ENCODE measurements at regions of chr1 and their contacts with region 1.

Region 1: DNA sequence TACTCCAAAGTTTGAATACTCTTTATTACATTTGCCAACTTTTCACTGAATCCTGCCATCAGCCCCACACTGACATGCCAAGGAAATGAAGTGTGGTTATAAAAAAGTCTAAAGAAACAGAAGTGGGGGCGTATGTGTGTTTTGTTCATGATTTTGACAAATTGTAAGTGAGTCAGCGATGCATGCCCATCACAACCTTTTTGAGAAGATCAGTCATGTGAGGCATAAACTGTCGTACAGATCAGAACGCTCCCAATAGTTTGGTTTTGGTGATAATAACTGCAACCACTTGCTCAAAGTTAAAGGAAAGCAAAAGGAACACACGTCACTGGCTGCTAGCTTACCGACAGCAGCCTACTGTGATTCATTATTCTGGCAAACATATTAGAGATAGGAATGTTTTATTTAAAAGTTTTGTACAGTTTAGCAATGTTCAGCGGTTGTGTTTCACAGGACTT is 95.6 kb downstream of the RGS2 start:
- DNase-seq: peak; percentile 27
- ATAC-seq: peak; percentile 93
- H3K4me3 Mint-ChIP-seq: no peak overlapping the region
- H3K27ac Mint-ChIP-seq: no peak overlapping the region
- H3K4me1 Mint-ChIP-seq: peaks cover 6% of the 10 kb centered on the region
- H3K27me3 Mint-ChIP-seq: no peaks in the 10 kb centered on the region

Region 2: GRCh38 chr1:192343344-192343743 is 561.1 kb before region 1 on chr1:
- CTCF ChIA-PET with region 1: no interaction called
- POLR2A ChIA-PET with region 1: no interaction called
- intact Hi-C with region 1: no loop called
- DNase-seq: no peak
- ATAC-seq: no peak
- H3K4me3 Mint-ChIP-seq: no peak overlapping the region
- H3K27ac Mint-ChIP-seq: no peak overlapping the region
- H3K4me1 Mint-ChIP-seq: no peaks in the 10 kb centered on the region
- H3K27me3 Mint-ChIP-seq: no peaks in the 10 kb centered on the region

Region 3: DNA sequence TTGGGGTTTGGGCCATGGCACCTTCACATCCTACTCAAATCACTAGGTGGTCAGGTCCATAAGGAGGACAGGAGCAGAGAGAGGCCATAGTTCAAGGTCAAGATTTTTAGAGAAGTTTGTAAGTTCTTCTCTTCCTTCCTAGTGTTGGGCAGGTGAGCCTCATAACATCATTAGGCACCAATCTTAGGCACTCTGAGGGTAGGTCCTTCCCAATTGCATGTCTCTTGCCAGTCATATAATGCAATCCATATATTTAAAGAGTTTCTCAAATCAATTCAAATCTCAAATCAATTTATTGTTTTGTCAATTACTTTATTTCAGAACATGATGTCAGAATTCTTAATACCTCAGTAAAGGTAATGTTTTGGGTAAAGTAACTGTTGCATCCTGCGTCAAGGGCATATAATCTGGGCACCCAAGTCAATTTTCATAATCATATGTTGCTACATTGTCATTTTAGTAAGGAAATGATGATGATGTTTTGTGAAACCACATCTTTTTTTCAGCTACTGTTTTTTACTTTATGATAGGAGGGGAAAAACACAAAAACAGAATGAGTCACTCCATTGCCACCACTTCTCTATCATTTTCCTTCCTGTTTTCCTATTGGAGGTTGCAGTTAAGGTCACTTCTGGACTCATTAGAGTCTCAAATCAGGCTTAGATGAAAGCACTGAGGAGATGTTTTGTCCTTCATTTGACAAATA is 32.0 kb after region 1 on chr1:
- CTCF ChIA-PET with region 1: no interaction called
- POLR2A ChIA-PET with region 1: no interaction called
- intact Hi-C with region 1: loop called (anchors 1 to 2 kb)
- DNase-seq: no peak
- ATAC-seq: peak; percentile 85
- H3K4me3 Mint-ChIP-seq: no peak overlapping the region
- H3K27ac Mint-ChIP-seq: peak overlapping the region; percentile 12
- H3K4me1 Mint-ChIP-seq: peaks cover 18% of the 10 kb centered on the region
- H3K27me3 Mint-ChIP-seq: no peaks in the 10 kb centered on the region

Region 4: DNA sequence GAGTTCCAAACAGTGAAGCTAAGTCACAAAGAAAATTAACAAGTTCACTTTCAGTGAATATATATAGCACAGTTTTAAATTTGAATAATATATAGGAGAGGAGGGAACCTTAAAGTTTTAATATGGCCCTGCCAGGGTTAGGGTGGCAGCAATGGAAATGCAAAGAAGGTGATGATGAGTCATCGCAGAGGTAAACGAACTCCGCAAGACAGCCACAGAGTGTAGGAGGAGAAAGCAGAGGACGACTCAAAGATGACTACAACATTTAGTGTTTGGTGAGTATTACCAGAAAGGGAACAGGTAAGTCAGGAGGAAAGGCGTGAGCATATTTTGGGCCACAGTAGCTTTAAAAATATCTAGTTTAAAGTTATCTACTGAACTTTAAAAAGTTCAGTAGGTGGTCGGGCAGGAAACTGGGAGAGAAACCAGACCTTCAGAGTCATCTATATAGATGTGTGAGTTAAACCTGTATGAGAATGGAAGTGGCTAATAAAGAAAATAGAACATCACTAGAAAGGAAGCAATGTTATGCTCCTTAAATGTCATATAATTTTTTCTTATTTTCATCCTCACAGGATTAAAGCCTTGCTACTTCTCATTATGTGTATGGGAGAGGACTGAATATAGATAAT is 79.0 kb after region 1 on chr1:
- CTCF ChIA-PET with region 1: no interaction called
- POLR2A ChIA-PET with region 1: no interaction called
- intact Hi-C with region 1: loop called in 1 of 2 experiments (anchors 1 kb)
- DNase-seq: peak; percentile 67
- ATAC-seq: peak; percentile 84
- H3K4me3 Mint-ChIP-seq: no peak overlapping the region
- H3K27ac Mint-ChIP-seq: peak overlapping the region; percentile 76
- H3K4me1 Mint-ChIP-seq: peaks cover 39% of the 10 kb centered on the region
- H3K27me3 Mint-ChIP-seq: no peaks in the 10 kb centered on the region